Head of caudate nucleus (tissue), 42 donors: ENCODE measurements at regions of chr2 and their contacts with region 1.

Region 1: DNA sequence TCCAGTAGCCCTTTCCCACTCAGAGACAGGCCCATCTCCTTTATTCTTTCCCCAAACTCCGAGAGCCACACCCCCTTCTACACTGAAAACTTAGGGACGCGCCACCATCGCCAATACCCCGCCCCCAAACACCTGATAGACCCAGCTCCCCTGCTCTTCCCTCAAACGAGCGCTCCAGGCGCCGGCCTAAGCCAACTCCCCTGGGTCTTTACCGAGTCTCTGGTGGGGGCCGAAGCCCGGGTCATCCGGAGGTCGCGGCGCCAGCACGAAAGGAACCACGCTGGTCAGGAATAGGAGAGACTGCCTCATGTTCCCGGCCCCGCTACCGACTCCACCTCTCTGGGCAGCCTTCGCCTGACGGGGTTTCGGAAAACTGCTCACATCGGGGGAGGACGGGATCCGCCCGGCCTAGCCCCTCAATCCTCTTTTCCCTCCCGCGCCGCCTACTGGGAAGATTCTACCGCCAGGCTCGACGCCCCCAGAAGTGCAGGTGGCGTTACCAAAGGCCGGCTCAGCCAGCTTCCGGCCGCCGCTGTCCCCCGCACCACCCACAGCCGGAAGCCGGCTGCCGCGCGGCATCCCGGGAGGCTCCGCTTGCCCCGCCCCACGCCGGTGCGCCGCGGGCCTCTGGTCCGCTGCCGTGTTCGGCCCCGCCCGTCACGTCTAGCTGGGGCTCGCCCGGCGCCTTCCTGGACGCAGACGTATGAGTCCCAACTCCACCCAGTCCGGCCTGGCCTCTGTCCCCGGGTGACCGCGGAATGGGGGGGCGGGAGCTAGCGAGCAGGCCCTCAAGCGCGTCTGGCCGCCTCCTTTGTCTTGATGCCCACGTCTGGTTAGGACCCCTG is at the start of gene ADAM17:
- DNase-seq: peak; percentile 78 to 95 (median 91)

Region 2: GRCh38 chr2:9630749-9631483 is 75.4 kb after region 1 on chr2 and contains the start of gene YWHAQ:
- intact Hi-C with region 1: loop called (anchors 5 kb)
- DNase-seq: peak; percentile 95 to 100 (median 99)

Region 3: GRCh38 chr2:9720352-9721093 is 165.0 kb after region 1 on chr2:
- intact Hi-C with region 1: no loop called
- DNase-seq: no peak